ENCODE measurements at regions of chr7 and their contacts with region 1.

Region 1: DNA sequence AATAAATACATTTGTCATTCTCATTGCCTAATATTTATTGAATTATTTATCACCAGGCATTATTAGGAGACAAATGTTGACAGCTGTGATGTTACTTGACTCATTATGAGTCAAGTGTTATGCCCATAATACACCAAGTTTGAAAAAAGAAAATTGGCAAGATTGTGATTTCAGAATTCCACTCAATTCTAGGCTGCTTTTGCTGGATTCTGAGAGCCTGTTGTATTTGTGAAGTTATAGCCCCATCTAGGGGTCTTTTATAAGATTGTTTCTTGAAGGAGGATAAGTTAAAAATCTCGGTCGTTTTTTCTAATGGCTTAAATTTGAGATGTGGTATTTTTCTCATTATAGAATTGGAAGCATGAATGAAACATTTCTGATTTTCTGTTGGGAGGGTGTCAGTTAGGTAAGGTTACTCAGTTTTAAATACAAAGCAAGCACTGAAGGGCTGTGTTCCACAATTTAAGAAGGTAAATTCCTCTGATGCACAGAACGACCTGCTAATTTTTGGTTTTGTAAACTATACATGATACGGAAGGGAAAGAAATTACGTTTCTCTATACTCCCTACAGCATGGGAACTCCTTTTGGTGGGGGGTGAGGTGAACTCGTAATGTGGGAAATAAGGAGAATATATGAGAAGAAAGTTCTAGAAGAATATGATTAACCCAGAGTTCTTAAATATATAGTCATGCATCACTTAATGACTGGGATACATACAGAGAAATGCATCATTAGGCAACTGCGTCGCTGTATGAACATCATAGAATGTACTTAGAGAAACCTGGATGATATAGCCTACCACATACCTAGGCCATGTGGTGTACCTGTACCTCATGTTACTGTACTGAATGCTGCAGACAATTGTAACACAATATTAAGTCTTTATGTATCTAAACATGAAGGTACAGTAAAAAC is 2.6 kb downstream of the STK31 start:
- DNase-seq: peak; percentile 81
- ATAC-seq: peak; percentile 30
- H3K4me3 ChIP-seq: peak overlapping the region; percentile 46; the same call in 1 of the 2 replicates
- H3K27ac ChIP-seq: no peak overlapping the region
- H3K4me1 ChIP-seq: peaks cover 32% of the 10 kb centered on the region
- H3K27me3 ChIP-seq: no peaks in the 10 kb centered on the region
- CTCF ChIP-seq: peak; percentile 82

Region 2: GRCh38 chr7:23347682-23348180 is 364.9 kb before region 1 on chr7:
- CTCF ChIA-PET with region 1: no interaction called
- POLR2A ChIA-PET with region 1: no interaction called
- intact Hi-C with region 1: loop called (anchors 5 kb)
- DNase-seq: peak; percentile 89
- ATAC-seq: peak; percentile 64
- H3K4me3 ChIP-seq: peak overlapping the region; percentile 62
- H3K27ac ChIP-seq: peak overlapping the region; percentile 98
- H3K4me1 ChIP-seq: peaks cover 75% of the 10 kb centered on the region
- H3K27me3 ChIP-seq: no peaks in the 10 kb centered on the region
- CTCF ChIP-seq: no peak

Region 3: DNA sequence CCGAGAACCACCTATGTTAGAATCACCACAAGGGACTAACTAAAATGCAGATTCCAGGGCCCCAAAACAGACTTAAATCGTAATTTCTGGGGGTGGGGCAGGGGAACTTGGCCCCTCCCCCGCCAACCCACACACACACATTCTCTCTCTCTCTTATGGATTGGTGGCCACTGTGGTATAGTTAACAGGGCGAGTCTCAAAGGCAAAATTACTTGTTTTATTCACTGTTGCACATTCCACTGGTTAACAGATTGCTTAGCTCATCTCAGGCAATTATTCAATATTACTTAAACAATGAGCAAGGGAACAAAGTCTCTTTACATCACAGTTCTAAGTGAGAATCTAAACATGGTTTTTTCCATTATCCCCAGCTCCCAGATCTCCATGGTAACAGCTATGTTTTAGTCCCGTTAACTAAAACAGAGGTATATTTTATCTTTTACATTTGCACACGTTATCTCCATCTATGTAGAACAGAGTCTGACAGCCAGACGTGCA is 280.9 kb before region 1 on chr7:
- CTCF ChIA-PET with region 1: interaction called, 3 read pairs
- POLR2A ChIA-PET with region 1: no interaction called
- intact Hi-C with region 1: loop called (anchors 10 kb)
- DNase-seq: no peak
- ATAC-seq: no peak
- H3K4me3 ChIP-seq: no peak overlapping the region
- H3K27ac ChIP-seq: no peak overlapping the region
- H3K4me1 ChIP-seq: 0 out of 2 replicates have a peak, but pooled peaks cover 5% of the 10 kb centered on the region
- H3K27me3 ChIP-seq: no peaks in the 10 kb centered on the region
- CTCF ChIP-seq: no peak

Region 4: DNA sequence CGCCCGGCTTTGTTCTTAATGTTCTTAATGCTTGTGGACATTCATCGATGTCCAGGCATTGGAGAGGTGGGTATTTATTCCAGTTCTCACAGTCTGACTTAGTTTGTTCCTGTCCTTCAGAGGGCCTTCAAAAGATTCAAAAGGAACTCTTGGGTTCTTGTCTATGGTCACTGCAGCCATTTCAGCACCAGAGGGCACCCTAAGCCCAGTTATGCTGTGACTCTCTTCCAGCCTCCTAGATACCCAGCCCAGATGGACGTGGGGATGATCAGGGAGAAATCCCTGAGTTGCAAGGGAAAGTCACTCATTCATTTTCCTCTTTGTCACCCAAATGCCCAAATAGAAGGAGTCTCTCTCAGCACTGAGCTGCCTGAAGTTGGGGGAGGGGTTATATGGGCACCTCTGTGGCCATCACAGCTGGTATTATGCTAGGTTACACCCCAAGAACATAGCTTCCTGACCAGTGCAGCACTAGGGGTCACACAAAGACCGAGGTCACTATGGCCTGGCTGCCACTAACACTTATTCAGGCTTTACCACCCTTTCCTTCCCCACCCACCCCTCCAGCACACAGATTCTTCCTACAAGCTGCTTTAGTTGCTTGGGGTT is 141.9 kb before region 1 on chr7:
- CTCF ChIA-PET with region 1: interaction called, 5 read pairs
- POLR2A ChIA-PET with region 1: interaction called, 4 read pairs
- intact Hi-C with region 1: loop called (anchors 1 kb)
- DNase-seq: peak; percentile 86
- ATAC-seq: peak; percentile 99
- H3K4me3 ChIP-seq: no peak overlapping the region
- H3K27ac ChIP-seq: no peak overlapping the region
- H3K4me1 ChIP-seq: no peaks in the 10 kb centered on the region
- H3K27me3 ChIP-seq: no peaks in the 10 kb centered on the region
- CTCF ChIP-seq: peak; percentile 93

Region 5: GRCh38 chr7:23654508-23654907 is 58.1 kb before region 1 on chr7:
- CTCF ChIA-PET with region 1: no interaction called
- POLR2A ChIA-PET with region 1: no interaction called
- intact Hi-C with region 1: loop called (anchors 5 kb)
- DNase-seq: peak; percentile 9
- ATAC-seq: no peak
- H3K4me3 ChIP-seq: no peak overlapping the region
- H3K27ac ChIP-seq: no peak overlapping the region
- H3K4me1 ChIP-seq: no peaks in the 10 kb centered on the region
- H3K27me3 ChIP-seq: no peaks in the 10 kb centered on the region
- CTCF ChIP-seq: peak; percentile 42; the same call in 1 of the 2 replicates

Region 6: DNA sequence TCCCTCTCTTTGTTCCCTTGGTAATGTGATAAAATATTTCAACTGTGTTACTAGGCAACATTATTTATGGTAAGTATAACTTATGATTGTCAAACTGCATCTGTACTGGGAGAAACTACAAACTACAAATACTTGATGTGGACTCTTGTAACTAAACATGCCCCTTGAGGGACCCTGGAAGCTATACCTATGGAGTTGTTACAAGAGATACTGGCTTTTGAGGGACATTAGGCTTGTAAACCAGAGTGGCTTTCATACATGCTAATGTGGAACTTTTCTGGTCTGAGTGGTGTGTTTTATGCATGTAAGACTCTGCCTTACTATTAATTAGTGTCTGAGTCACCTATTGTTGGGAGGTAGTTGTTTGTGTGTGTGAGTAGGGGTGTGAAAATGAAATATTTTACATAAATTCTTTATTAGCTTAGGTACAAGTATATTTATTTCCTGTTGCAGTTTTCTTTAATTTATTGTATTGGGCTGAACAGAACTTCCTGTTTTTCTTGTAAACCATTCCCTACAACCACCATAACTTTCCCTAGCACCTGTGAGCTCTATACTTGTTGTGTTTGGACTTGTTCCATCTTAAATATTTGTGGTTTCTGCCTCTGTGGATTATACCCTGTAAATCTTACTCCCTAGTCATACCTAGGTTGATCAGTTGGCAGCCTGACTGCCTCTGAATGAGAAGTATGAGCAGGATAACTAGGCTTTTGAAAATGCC is 47.2 kb after region 1 on chr7:
- CTCF ChIA-PET with region 1: interaction called, 3 read pairs
- POLR2A ChIA-PET with region 1: interaction called, 4 read pairs
- intact Hi-C with region 1: loop called (anchors 1 kb)
- DNase-seq: peak; percentile 86
- ATAC-seq: peak; percentile 99
- H3K4me3 ChIP-seq: no peak overlapping the region
- H3K27ac ChIP-seq: no peak overlapping the region
- H3K4me1 ChIP-seq: peaks cover 18% of the 10 kb centered on the region
- H3K27me3 ChIP-seq: no peaks in the 10 kb centered on the region
- CTCF ChIP-seq: no peak